ENCODE measurements at regions of chr17 and their contacts with region 1.

Region 1: DNA sequence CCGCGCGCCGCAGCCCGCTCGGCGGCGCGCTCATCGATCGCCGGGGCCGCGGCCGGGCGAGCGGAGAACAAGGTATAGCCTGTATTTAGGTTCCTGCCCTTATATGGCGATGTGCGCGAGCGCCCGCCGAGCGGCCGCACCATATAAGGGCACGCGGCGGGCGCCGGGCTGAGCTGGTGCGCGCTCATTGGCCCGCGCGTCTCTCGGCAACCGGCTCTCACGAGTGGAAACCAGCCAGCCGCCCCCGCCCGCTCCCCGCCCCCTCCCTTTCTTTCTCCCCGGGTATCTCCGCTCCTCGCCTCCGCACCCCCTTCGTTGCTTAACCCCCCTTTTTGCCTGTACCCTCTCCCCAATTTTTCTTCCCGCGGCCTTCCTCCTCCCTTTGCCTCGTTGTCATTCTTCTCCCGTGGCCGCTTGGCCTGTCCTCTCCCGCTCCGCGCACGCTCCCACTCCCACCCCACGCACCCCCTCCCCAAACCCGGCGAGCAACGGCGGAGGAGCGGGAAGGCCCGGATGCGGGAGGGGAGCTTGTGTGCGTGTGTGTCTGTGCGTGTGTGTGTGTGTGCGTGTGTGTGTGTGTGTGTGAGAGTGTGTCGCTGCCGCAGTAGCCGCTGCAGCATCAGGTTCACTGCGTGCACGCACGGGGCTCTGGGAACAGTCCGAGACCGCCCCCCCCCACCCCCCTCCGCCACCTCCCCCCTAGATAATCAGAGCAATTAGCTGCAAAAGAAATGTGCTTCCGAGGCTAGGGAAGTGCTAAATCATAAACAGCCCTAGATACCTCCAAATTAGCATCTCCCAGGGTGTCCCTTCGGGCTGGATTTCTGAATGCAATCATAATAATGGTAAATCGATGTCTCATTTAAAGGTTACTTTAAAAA is 13.5 kb upstream of the CBX8 start:
- DNase-seq: peak; percentile 89

Region 2: GRCh38 chr17:79749156-79749815 is 61.1 kb before region 1 on chr17:
- intact Hi-C with region 1: no loop called
- DNase-seq: no peak

Region 3: DNA sequence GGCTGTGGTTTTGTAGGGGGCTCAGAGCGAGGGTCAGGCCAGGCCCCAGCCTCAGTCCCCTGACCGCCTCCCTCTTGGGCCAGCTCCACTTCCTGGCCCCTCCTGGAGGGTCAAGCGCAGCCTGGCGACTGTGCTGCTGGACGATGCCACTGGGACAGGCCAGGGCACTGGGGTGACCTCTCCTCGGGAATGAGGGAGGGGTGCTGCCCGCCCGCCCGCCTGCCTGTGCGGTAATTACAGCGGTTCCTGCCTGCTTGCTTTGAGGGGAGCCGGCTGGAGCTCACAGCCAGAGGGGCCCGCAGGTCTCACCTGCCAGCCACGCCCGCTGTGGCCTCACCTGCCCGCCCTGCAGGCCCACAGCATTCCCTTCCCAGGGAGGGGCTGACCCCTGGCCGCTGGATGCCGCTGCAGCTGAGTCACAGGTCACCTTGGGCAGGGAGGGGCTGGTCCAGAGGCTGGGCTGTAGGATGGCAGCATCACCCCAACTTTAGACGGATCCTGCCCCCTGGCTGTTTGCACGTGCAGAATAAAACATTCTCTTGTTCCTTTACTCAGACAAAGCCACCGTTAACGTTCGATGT is 105.6 kb after region 1 on chr17:
- intact Hi-C with region 1: loop called (anchors 5 kb)
- DNase-seq: no peak

Region 4: GRCh38 chr17:79951361-79952264 is 141.2 kb after region 1 on chr17:
- intact Hi-C with region 1: no loop called
- DNase-seq: peak; percentile 77

Region 5: GRCh38 chr17:79970576-79971068 is 160.3 kb after region 1 on chr17:
- intact Hi-C with region 1: loop called (anchors 5 kb)
- DNase-seq: peak; percentile 67

Measured in cardiac septum (tissue), 1 donor.